ENCODE measurements at regions of chr5 and their contacts with region 1.

Region 1: GRCh38 chr5:143557061-143557818 is 153.8 kb upstream of the NR3C1 start:
- DNase-seq: no peak
- H3K4me3 Mint-ChIP-seq: no peak overlapping the region
- H3K27ac Mint-ChIP-seq: no peak overlapping the region
- H3K4me1 Mint-ChIP-seq: peaks cover 6% of the 10 kb centered on the region
- H3K27me3 Mint-ChIP-seq: peaks cover 3% of the 10 kb centered on the region

Region 2: DNA sequence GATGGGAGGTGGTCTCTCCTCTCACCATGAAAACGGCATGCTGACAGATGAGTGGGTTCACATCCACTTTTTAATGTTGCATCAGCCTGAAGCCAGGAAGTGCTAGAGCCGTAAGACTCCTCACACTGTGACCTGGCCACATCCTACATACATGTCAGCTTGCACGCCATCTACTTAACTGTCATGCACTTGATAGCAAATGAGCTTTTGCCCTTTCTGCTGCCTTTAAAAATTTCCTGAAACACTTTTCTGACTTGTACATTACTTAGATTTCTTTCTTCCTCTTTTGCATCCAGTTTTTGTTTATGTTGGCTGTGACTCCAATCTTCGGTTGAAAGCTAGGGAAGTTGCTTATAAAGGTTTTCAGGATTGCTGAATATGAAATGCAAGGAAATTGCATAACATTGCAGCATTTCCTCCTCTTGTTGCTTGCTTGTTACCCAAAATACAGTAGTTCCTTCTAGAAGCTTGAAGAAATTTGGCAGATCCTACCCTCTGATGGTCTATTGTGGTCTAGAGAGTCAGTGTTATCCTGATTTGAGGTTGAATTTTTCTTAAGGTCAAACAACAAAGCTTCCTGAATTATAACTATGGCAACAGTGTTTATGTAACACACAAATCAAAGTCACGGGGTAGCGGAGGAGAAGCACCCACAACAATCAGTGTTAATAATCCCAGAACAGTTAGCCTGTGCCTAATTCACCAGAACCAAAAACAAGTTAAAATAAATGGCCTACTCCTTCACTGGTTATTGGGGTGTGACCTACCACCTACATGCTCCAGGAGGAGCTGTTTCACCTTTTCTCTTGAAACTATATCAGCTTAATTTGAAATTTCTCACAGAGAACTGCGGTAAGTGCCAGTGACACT is 554.5 kb before region 1 on chr5:
- CTCF ChIA-PET with region 1: no interaction called
- intact Hi-C with region 1: loop called (anchors 5 kb)
- DNase-seq: peak; percentile 82
- H3K4me3 Mint-ChIP-seq: peak overlapping the region; percentile 2
- H3K27ac Mint-ChIP-seq: peak overlapping the region; percentile 92
- H3K4me1 Mint-ChIP-seq: peaks cover 53% of the 10 kb centered on the region
- H3K27me3 Mint-ChIP-seq: no peaks in the 10 kb centered on the region

Region 3: GRCh38 chr5:143533978-143534764 is 23.1 kb before region 1 on chr5:
- CTCF ChIA-PET with region 1: no interaction called
- intact Hi-C with region 1: no loop called
- DNase-seq: no peak
- H3K4me3 Mint-ChIP-seq: no peak overlapping the region
- H3K27ac Mint-ChIP-seq: no peak overlapping the region
- H3K4me1 Mint-ChIP-seq: no peaks in the 10 kb centered on the region
- H3K27me3 Mint-ChIP-seq: no peaks in the 10 kb centered on the region

Region 4: GRCh38 chr5:144060598-144060997 is 503.4 kb after region 1 on chr5:
- CTCF ChIA-PET with region 1: no interaction called
- intact Hi-C with region 1: no loop called
- DNase-seq: no peak
- H3K4me3 Mint-ChIP-seq: no peak overlapping the region
- H3K27ac Mint-ChIP-seq: no peak overlapping the region
- H3K4me1 Mint-ChIP-seq: no peaks in the 10 kb centered on the region
- H3K27me3 Mint-ChIP-seq: peaks cover 6% of the 10 kb centered on the region

Region 5: DNA sequence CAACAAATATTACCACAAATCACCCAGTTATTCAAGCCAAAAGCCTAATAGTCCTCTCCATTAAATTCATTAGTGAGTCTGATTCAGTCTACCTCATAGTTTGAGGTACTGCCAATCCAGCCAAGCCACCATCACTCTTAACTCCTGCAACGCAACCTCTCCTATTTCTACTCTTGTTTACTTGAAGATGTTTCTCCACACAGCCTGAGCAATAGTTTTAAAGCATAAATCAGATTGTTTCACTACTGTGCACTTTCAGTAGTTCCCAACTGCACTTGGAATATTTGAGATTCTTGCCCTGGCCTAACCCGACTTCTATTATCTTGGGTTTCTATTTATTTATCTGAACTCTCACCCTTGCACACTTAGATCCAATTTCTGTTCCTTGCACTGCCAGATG is 527.7 kb after region 1 on chr5:
- CTCF ChIA-PET with region 1: no interaction called
- intact Hi-C with region 1: no loop called
- DNase-seq: no peak
- H3K4me3 Mint-ChIP-seq: no peak overlapping the region
- H3K27ac Mint-ChIP-seq: no peak overlapping the region
- H3K4me1 Mint-ChIP-seq: peaks cover 2% of the 10 kb centered on the region
- H3K27me3 Mint-ChIP-seq: no peaks in the 10 kb centered on the region